ENCODE measurements at regions of chr10 and their contacts with region 1.

Region 1: DNA sequence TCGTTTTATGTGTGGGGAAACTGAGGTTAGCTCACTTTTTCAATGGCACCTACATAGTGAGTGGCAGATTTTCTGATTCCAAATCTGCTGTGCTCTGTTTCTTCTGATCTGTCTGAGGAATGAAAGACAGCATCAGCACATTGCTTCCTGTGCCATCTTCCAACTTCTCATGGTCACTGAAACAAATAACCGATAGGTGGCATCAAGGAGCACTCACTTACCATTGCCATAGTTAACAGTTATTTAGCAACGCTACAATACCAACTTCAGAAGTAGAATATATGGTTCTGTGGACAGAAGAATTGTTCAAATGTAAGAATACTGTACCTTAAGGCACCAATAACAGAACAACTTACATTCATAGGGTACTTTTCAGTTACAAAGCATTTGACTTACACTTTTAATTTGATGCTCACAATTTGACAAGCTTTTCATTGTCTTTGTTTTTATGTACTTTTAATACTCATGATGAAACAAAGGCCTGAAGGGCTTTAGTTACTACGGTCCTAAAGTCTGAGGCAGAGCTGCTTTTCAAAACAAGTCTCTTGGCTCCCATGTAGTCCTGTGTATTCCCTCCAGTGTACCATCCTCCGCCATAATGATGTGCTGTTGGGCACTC is 228.9 kb upstream of the TCF7L2 start:
- DNase-seq: peak; percentile 30
- CTCF ChIP-seq: peak; percentile 44

Region 2: GRCh38 chr10:112732277-112732921 is 11.2 kb after region 1 on chr10:
- CTCF ChIA-PET with region 1: interaction called, 16 read pairs
- POLR2A ChIA-PET with region 1: no interaction called
- DNase-seq: no peak
- CTCF ChIP-seq: no peak

Region 3: GRCh38 chr10:112775381-112775780 is 54.2 kb after region 1 on chr10:
- CTCF ChIA-PET with region 1: no interaction called
- POLR2A ChIA-PET with region 1: no interaction called
- DNase-seq: no peak
- CTCF ChIP-seq: no peak

Region 4: GRCh38 chr10:113385021-113385999 is 664.1 kb after region 1 on chr10:
- CTCF ChIA-PET with region 1: interaction called, 15 read pairs
- POLR2A ChIA-PET with region 1: no interaction called
- DNase-seq: peak; percentile 53
- CTCF ChIP-seq: peak; percentile 67

Measured in GM10248 (cell line).